ENCODE measurements at regions of chr20 and their contacts with region 1.

Region 1: DNA sequence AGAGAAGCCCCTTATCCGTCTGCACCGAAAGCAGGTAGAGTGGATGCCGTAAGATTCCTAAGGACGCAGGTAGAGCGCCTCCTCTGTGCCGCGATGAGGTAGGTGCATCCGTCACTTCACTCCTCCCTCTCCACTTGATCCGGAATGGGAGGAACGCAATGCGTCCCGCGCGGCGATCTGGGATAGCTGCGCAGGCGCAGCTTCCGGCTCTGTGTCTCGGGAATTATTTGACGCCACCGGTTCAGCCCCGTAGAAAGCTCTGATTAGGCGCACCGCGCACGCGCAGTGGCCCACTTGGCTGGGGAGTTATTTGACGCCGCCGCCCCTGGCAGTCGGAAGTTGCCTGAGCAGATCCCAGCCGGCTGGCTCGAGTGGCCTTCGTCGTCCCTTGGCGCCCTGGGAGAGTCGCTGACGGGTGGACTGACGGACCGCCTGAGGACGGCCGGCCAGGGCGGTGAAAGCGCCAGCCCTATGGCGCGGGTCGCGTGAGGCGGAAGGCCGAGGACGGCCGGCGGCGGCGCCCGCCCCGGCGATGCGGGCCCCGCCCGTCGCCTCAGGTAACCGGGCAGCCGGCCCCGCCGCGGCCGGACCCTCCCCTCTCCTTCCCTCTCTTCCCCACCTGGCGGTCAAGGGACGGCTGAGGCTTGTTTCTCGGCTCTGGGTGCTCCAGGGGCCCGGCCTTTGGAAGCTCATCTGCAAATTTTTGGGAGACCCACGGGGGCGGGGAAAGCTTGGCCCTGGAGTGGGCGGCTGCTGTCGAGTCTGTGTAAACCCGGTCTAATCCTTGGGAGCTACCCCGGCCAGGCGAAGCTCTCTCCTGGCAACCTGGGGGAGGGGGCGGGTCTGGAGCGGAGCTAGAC is at the start of gene RALGAPB:
- DNase-seq: peak; percentile 99
- ATAC-seq: peak; percentile 97 to 98
- total RNA-seq, gene RALGAPB: 19.5 to 27.2 TPM

Region 2: GRCh38 chr20:38434743-38435554 is 37.8 kb before region 1 on chr20 and contains the start of gene SNHG17:
- intact Hi-C with region 1: loop called in 1 of 2 experiments (anchors 1 kb)
- DNase-seq: peak; percentile 93
- ATAC-seq: peak; percentile 91 to 92
- total RNA-seq, gene SNHG17: 7.9 to 35.0 TPM